ENCODE measurements at regions of chr11 and their contacts with region 1.

Region 1: GRCh38 chr11:124673333-124674167 is at the starts of genes SIAE and SPA17:
- DNase-seq: peak; percentile 58 to 92 (median 75)
- ATAC-seq: peak; percentile 78 to 85 (median 82)
- H3K4me3 ChIP-seq: peak within 1 kb of the TSS; percentile 71 to 77
- H3K4me3 Mint-ChIP-seq: peak within 1 kb of the TSS; percentile 80 to 88 (median 84)
- H3K27ac ChIP-seq: peak within 1 kb of the TSS; percentile 78
- H3K27ac Mint-ChIP-seq: peak within 1 kb of the TSS; percentile 91
- H3K4me1 ChIP-seq: peaks cover 30 to 33% of the 10 kb centered on the region in 2 experiments
- H3K4me1 Mint-ChIP-seq: peaks cover 29 to 34% (median 31%) of the 10 kb centered on the region in 3 donors
- H3K27me3 ChIP-seq: no peaks in the 10 kb centered on the region
- H3K27me3 Mint-ChIP-seq: no peaks in the 10 kb centered on the region
- total RNA-seq, gene SIAE: 3.7 to 9.7 (median 6.2) TPM
- total RNA-seq, gene SPA17: 0.28 to 0.92 (median 0.59) TPM

Region 2: GRCh38 chr11:124644426-124645280 is 28.9 kb before region 1 on chr11:
- CTCF ChIA-PET with region 1: interaction called in 1 of 2 experiments, 10 read pairs
- POLR2A ChIA-PET with region 1: no interaction called
- DNase-seq: peak in 17 of 35 experiments; percentile 1 to 64 (median 8)
- ATAC-seq: peak; percentile 53 to 77 (median 66)
- H3K4me3 ChIP-seq: no peak overlapping the region
- H3K4me3 Mint-ChIP-seq: no peak overlapping the region
- H3K27ac ChIP-seq: no peak overlapping the region
- H3K27ac Mint-ChIP-seq: no peak overlapping the region
- H3K4me1 ChIP-seq: peaks cover 0 to 3% of the 10 kb centered on the region in 2 experiments
- H3K4me1 Mint-ChIP-seq: peaks cover 0 to 4% (median 3%) of the 10 kb centered on the region in 3 donors
- H3K27me3 ChIP-seq: no peaks in the 10 kb centered on the region
- H3K27me3 Mint-ChIP-seq: no peaks in the 10 kb centered on the region

Region 3: GRCh38 chr11:124758317-124759203 is 85.0 kb after region 1 on chr11:
- CTCF ChIA-PET with region 1: interaction called, 26 to 45 read pairs
- POLR2A ChIA-PET with region 1: interaction called in 1 of 2 experiments, 6 read pairs
- DNase-seq: peak in 34 of 35 experiments; percentile 42 to 76 (median 58)
- ATAC-seq: peak; percentile 63 to 69 (median 66)
- H3K4me3 ChIP-seq: peak overlapping the region; percentile 9 to 67
- H3K4me3 Mint-ChIP-seq: peak overlapping the region; percentile 64 to 74 (median 71)
- H3K27ac ChIP-seq: no peak overlapping the region
- H3K27ac Mint-ChIP-seq: peak overlapping the region in 1 of 2 donors; percentile 77
- H3K4me1 ChIP-seq: peaks cover 19 to 55% of the 10 kb centered on the region in 2 experiments
- H3K4me1 Mint-ChIP-seq: peaks cover 26 to 45% (median 27%) of the 10 kb centered on the region in 3 donors
- H3K27me3 ChIP-seq: peaks cover 0 to 82% of the 10 kb centered on the region in 2 experiments
- H3K27me3 Mint-ChIP-seq: peaks cover 29 to 57% of the 10 kb centered on the region in 2 donors

Region 4: GRCh38 chr11:124837491-124837856 is 163.9 kb after region 1 on chr11:
- CTCF ChIA-PET with region 1: interaction called, 22 to 59 read pairs
- POLR2A ChIA-PET with region 1: interaction called in 1 of 2 experiments, 4 read pairs
- DNase-seq: peak in 1 of 35 experiments; percentile 32
- ATAC-seq: peak in 1 of 4 experiments; percentile 47
- H3K4me3 ChIP-seq: no peak overlapping the region
- H3K4me3 Mint-ChIP-seq: peak overlapping the region in 1 of 3 donors; percentile 78
- H3K27ac ChIP-seq: no peak overlapping the region
- H3K27ac Mint-ChIP-seq: no peak overlapping the region
- H3K4me1 ChIP-seq: peaks cover 2 to 17% of the 10 kb centered on the region in 2 experiments
- H3K4me1 Mint-ChIP-seq: peaks cover 19 to 23% (median 21%) of the 10 kb centered on the region in 3 donors
- H3K27me3 ChIP-seq: peaks cover 23 to 44% of the 10 kb centered on the region in 2 experiments
- H3K27me3 Mint-ChIP-seq: peaks cover 49 to 71% of the 10 kb centered on the region in 2 donors